A673 (cell line): ENCODE measurements at regions of chr1 and their contacts with region 1.

Region 1: DNA sequence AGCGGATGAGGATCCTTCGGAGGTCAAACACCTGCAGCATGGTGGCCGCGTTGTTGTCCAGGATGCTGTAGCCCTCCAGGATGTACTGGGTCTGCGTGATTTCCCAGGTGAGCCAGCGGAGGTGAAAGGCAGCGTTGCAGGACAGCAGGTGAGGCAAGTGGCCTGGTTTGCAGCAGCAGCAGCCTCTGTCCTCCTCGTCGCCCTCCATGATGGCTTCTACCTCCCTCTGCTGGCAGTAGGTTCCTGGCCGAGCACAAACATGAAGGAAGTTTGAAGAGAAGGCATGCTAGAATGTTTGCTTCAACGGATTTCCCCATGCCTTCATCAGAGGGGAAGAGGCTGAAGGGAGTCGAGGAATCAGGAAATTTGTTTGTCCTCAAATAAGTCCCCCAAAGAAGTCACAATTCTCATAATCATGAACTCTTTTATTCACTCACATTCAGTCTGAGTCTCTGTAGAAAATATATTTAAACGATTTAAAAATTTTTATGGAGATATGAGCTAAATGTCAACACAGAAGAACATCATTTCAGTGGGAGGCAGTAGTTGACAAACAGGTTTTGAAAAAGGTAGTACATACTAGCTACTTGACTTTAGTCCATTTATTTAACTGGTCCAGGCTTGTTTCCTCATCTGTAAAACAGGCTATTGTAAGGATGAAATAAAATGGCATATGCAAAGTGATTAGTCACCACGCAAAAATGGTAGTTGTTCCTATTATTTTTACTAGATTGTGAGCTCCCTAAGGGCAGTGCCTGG is 74.9 kb downstream of the NTPCR start:
- DNase-seq: peak; percentile 52
- H3K4me3 ChIP-seq: no peak overlapping the region
- H3K27ac ChIP-seq: no peak overlapping the region
- H3K4me1 ChIP-seq: peaks cover 8% of the 10 kb centered on the region
- H3K27me3 ChIP-seq: no peaks in the 10 kb centered on the region
- CTCF ChIP-seq: peak; percentile 66

Region 2: GRCh38 chr1:232952514-232953499 is 72.5 kb before region 1 on chr1:
- CTCF ChIA-PET with region 1: no interaction called
- POLR2A ChIA-PET with region 1: no interaction called
- intact Hi-C with region 1: no loop called
- DNase-seq: peak; percentile 82
- H3K4me3 ChIP-seq: no peak overlapping the region
- H3K27ac ChIP-seq: no peak overlapping the region
- H3K4me1 ChIP-seq: peaks cover 20% of the 10 kb centered on the region
- H3K27me3 ChIP-seq: no peaks in the 10 kb centered on the region
- CTCF ChIP-seq: peak; percentile 67

Region 3: DNA sequence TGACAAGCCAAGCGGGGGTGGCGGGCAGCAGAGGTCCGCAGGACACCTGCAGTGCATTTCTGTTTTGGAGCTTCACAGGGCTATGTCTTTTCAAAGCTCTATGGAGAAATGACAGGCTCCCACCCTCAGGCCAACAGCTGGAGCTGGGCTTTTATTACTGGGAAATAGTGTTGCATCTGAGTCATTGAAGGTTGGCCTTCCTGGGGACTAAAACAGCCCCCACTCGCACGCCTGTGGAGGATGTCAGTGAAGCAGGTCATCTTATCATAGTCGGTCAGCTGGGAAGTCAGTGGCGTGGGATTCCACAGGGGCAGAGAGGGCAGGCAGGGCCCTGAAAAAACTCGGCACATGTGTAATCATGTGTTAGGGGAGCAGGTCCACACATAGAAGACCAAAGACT is 19.6 kb before region 1 on chr1:
- CTCF ChIA-PET with region 1: no interaction called
- POLR2A ChIA-PET with region 1: no interaction called
- intact Hi-C with region 1: no loop called
- DNase-seq: no peak
- H3K4me3 ChIP-seq: no peak overlapping the region
- H3K27ac ChIP-seq: no peak overlapping the region
- H3K4me1 ChIP-seq: no peaks in the 10 kb centered on the region
- H3K27me3 ChIP-seq: no peaks in the 10 kb centered on the region
- CTCF ChIP-seq: no peak

Region 4: DNA sequence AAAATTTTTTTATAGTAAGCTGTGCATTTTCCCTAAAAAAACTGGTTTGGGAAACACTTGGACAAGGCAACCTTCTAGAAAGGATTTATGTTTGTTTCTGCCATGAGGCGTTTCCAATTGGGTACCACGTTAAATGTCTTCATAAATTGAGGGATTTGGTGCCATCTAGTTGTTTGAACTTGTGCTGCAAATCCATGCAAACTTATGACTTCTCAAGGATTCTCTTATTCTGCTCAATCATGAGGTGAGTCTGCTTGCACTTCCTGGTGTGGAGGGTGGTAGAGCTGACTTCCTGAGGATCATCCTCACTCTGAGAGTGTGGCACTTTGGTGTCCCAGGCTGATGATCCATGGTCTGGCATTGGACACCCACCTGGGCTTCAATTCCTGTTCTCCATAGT is 146.9 kb after region 1 on chr1:
- CTCF ChIA-PET with region 1: no interaction called
- POLR2A ChIA-PET with region 1: no interaction called
- intact Hi-C with region 1: loop called (anchors 10 kb)
- DNase-seq: peak; percentile 75
- H3K4me3 ChIP-seq: no peak overlapping the region
- H3K27ac ChIP-seq: no peak overlapping the region
- H3K4me1 ChIP-seq: no peaks in the 10 kb centered on the region
- H3K27me3 ChIP-seq: no peaks in the 10 kb centered on the region
- CTCF ChIP-seq: peak; percentile 61